ENCODE measurements at regions of chr2 and their contacts with region 1.

Region 1: GRCh38 chr2:36355151-36355889 is at the start of gene CRIM1:
- DNase-seq: peak; percentile 74
- ATAC-seq: peak; percentile 70
- H3K4me3 Mint-ChIP-seq: peak within 1 kb of the TSS; percentile 74
- H3K27ac Mint-ChIP-seq: peak within 1 kb of the TSS; percentile 32
- H3K4me1 Mint-ChIP-seq: peaks cover 24% of the 10 kb centered on the region
- H3K27me3 Mint-ChIP-seq: peaks cover 41% of the 10 kb centered on the region
- total RNA-seq, gene CRIM1: 3.9 to 5.2 TPM

Region 2: DNA sequence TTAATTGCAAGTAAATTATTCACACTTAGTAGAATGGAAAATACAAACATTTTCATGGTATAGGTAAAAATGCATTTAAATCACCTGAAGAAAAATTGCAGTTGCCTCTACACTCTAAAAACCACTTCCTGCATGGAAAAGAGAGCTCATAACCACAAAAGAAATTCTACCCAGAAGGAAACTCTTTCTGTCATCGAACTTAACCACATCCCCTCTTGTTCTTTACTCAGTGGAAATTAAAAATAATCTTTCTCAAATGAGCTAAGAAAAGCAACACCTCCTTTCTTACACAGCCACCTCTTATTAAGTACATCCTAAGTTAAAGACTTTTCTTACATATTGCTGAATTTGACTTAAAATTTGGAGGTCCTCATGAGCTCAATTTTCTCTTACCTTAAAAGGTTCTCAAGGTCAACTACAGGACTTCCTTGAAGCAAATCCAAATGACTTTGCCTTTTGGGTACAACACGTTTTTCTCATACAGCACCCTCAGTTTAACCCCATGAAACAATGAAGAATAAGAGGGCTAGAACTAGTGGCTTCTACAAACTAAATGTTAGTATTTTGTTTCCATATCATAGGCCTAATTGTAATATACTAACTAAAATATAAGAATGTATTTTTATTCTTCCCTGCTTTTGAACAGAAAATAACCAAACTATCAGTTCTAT is 108.9 kb before region 1 on chr2:
- CTCF ChIA-PET with region 1: interaction called, 5 read pairs
- POLR2A ChIA-PET with region 1: no interaction called
- intact Hi-C with region 1: loop called (anchors 2 to 10 kb)
- DNase-seq: no peak
- ATAC-seq: peak; percentile 82
- H3K4me3 Mint-ChIP-seq: peak overlapping the region; percentile 54
- H3K27ac Mint-ChIP-seq: peak overlapping the region; percentile 84
- H3K4me1 Mint-ChIP-seq: peaks cover 61% of the 10 kb centered on the region
- H3K27me3 Mint-ChIP-seq: peaks cover 4% of the 10 kb centered on the region

Region 3: DNA sequence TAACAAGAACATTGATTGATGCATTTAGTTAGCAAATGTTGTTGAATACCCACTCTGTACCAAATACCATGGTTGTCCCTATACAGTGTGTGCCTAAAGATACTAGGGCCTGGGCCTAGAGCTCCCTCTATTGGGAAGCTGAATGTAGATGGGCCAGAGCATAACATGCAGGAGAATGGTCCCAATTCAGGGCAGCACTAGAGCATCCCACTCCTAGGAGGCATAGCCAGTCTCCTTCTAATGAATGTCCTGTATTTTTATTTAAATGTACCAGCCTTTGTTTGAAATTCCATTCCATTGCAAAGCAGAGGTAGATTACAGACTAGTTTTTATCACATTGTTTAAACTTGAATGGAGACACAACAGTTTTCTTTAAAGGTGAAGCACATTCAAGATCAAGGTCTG is 152.1 kb after region 1 on chr2:
- CTCF ChIA-PET with region 1: interaction called, 4 read pairs
- POLR2A ChIA-PET with region 1: no interaction called
- intact Hi-C with region 1: loop called (anchors 2 kb)
- DNase-seq: peak; percentile 57
- ATAC-seq: peak; percentile 92
- H3K4me3 Mint-ChIP-seq: no peak overlapping the region
- H3K27ac Mint-ChIP-seq: no peak overlapping the region
- H3K4me1 Mint-ChIP-seq: no peaks in the 10 kb centered on the region
- H3K27me3 Mint-ChIP-seq: no peaks in the 10 kb centered on the region

Region 4: DNA sequence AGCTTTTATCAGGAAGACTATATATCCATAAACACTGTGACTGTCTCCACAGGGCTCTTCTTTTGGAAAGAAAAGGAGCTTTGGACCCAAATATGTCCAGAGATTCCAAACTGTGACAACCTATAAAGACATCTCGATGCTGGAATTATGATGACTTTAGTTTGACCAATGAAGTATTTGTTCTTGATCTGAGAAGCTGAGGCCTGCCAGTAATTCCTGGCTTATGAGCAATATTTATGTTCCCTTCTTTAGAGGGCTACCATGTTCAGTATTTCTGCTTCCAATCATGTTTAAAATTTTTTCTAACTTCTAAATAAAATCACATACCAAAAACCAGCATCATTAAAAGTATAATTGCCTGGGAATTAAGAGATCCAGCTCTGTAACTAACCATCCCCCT is 201.5 kb after region 1 on chr2:
- CTCF ChIA-PET with region 1: no interaction called
- POLR2A ChIA-PET with region 1: no interaction called
- intact Hi-C with region 1: no loop called
- DNase-seq: no peak
- ATAC-seq: no peak
- H3K4me3 Mint-ChIP-seq: no peak overlapping the region
- H3K27ac Mint-ChIP-seq: no peak overlapping the region
- H3K4me1 Mint-ChIP-seq: peaks cover 4% of the 10 kb centered on the region
- H3K27me3 Mint-ChIP-seq: no peaks in the 10 kb centered on the region

Region 5: DNA sequence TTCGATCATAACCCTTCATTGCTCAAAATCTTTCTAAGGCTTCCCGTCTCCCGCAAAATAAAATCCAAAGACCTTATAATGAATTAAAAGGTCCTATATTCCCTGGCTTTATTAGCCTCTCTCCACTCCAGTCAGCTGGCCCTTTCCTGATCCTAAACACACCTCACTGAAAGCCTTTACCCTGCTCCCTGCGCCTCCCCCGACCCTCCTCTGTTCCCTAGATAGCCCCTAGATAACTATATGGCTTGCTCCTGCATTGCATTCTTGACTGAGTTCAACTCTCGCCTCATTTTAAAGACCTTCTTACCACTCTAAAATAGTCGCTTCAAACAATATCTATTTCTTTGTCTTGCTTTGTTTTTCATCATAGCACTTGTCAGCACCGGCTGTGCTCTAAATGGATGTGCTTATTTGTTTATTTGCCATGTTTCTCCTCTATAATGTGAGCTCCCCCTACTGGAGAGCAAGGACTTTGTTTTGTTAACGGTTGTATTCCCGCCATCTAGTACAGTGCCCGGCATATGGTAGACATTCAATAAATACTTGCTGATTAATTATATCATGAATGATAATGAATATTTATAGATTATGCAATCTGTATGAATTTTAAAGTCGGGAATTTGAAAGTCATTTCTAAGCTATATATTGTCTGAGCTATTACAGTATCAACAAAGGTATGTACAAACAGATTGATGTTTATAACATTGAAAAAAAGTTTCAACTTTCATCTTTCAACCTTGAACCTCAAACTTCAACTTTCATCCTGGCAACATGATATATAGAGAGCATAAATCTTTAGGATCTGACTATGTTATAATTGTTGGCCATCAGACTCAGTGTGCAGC is 308.8 kb after region 1 on chr2:
- CTCF ChIA-PET with region 1: interaction called, 4 read pairs
- POLR2A ChIA-PET with region 1: no interaction called
- intact Hi-C with region 1: loop called (anchors 1 to 5 kb)
- DNase-seq: peak; percentile 15
- ATAC-seq: peak; percentile 69
- H3K4me3 Mint-ChIP-seq: no peak overlapping the region
- H3K27ac Mint-ChIP-seq: no peak overlapping the region
- H3K4me1 Mint-ChIP-seq: no peaks in the 10 kb centered on the region
- H3K27me3 Mint-ChIP-seq: peaks cover 7% of the 10 kb centered on the region

Region 6: GRCh38 chr2:36785179-36785795 is 430.0 kb after region 1 on chr2:
- CTCF ChIA-PET with region 1: no interaction called
- POLR2A ChIA-PET with region 1: no interaction called
- intact Hi-C with region 1: loop called (anchors 5 to 10 kb)
- DNase-seq: peak; percentile 76
- ATAC-seq: peak; percentile 87
- H3K4me3 Mint-ChIP-seq: no peak overlapping the region
- H3K27ac Mint-ChIP-seq: no peak overlapping the region
- H3K4me1 Mint-ChIP-seq: peaks cover 3% of the 10 kb centered on the region
- H3K27me3 Mint-ChIP-seq: peaks cover 16% of the 10 kb centered on the region

Measured in activated CD4-positive, alpha-beta T cell treated with anti-CD3 and anti-CD28 coated beads for 36 hours (primary cell).